PC-3 (cell line): ENCODE measurements at regions of chr17 and their contacts with region 1.

Region 1: GRCh38 chr17:47649153-47649971 is at the start of gene KPNB1:
- DNase-seq: peak; percentile 100
- ATAC-seq: peak; percentile 86
- H3K4me3 ChIP-seq: peak within 1 kb of the TSS; percentile 84
- H3K27ac ChIP-seq: peak within 1 kb of the TSS; percentile 79
- H3K4me1 ChIP-seq: peaks cover 36% of the 10 kb centered on the region
- H3K27me3 ChIP-seq: no peaks in the 10 kb centered on the region
- CTCF ChIP-seq: no peak
- total RNA-seq, gene KPNB1: 390 and 437 TPM in 2 replicates

Region 2: DNA sequence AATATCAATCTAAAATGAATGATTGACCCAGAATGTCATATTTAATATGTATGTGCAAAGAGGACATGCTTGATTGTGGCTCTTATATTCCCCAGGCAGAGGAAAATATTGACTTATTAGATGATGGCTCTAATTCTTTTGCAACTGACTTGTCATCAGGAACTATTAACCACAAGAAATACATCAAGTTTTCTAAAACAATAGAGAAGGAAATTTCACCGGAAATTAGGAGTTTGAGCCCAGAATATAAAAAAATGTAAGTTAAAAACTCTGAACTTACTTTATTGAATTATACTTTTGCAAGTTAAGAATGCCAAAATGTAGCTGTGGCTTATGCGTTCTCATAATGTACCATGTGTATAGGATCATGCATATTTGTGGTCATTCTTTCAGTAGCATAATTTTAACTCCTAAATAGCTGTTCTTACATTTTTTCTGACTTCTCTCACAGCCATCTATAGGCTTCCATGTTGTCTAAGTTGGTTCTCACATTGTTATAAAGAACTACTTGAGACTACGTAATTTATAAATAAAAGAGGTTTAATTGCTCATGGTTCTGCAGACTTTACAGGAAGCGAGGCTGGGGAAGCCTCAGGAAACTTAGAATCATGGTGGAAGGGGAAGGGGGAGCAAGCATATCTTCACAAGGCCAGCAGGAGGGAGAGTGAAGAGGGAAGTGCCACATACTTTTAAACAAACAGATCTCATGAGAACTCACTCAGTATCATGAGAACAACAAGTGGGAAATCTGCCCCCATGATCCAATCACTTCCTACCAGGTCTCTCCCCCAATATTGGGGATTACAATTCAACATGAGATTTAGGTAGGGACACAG is 314.0 kb before region 1 on chr17:
- CTCF ChIA-PET with region 1: no interaction called
- POLR2A ChIA-PET with region 1: no interaction called
- intact Hi-C with region 1: loop called (anchors 10 kb)
- DNase-seq: no peak
- ATAC-seq: no peak
- H3K4me3 ChIP-seq: no peak overlapping the region
- H3K27ac ChIP-seq: no peak overlapping the region
- H3K4me1 ChIP-seq: peaks cover 7% of the 10 kb centered on the region
- H3K27me3 ChIP-seq: no peaks in the 10 kb centered on the region
- CTCF ChIP-seq: no peak

Region 3: DNA sequence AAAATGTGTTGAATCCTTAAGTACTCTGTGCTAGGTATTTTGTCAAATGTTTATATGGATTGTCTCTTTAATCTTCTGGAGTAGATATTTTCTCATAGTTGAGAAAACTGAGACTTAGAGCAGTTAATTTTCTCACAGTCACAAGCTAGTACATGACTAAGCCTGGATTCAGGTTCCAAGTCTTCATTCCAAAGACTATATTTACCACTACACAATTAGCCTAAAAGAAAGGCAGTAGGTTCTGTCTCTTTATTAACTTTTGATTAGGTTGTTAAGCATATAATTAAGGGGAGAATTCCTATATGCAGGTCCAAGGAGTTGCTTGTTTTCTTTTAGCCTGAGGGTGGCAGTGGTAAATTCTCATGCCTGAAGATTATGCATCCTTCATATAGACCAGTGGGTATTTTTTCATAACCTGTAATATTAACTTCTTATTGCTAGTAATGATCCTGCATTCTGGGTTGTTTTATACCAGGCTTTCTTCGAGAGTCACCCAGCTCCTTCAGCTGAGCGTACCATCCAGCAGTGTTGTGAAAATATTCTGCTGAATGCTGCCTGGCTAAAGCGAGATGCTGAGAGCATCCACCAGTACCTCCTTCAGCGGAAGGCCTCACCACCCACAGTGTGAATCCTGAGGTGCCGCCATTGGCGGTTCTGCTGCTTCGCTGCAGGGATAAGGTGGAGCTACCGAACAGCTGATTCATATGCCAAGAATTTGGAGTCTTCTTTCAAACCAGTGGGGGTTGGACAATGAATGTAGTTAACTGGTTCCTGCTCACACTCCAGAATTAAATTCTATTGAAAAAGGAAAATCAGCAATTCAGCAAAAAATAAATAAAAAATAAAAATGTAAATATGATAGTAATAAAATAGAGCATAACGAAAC is 27.8 kb before region 1 on chr17:
- CTCF ChIA-PET with region 1: interaction called, 5 read pairs
- POLR2A ChIA-PET with region 1: interaction called, 9 read pairs
- intact Hi-C with region 1: loop called (anchors 1 kb)
- DNase-seq: peak; percentile 98
- ATAC-seq: peak; percentile 93
- H3K4me3 ChIP-seq: no peak overlapping the region; the same call in 1 of the 2 replicates
- H3K27ac ChIP-seq: peak overlapping the region; percentile 41
- H3K4me1 ChIP-seq: peaks cover 27% of the 10 kb centered on the region
- H3K27me3 ChIP-seq: no peaks in the 10 kb centered on the region
- CTCF ChIP-seq: peak; percentile 48

Region 4: GRCh38 chr17:47698749-47699535 is 49.6 kb after region 1 on chr17:
- CTCF ChIA-PET with region 1: no interaction called
- POLR2A ChIA-PET with region 1: interaction called, 11 read pairs
- intact Hi-C with region 1: no loop called
- DNase-seq: peak; percentile 75
- ATAC-seq: peak; percentile 26
- H3K4me3 ChIP-seq: no peak overlapping the region
- H3K27ac ChIP-seq: no peak overlapping the region
- H3K4me1 ChIP-seq: peaks cover 7% of the 10 kb centered on the region; the same call in 1 of the 2 replicates
- H3K27me3 ChIP-seq: no peaks in the 10 kb centered on the region
- CTCF ChIP-seq: peak; percentile 99

Region 5: GRCh38 chr17:47757386-47757785 is 108.0 kb after region 1 on chr17:
- CTCF ChIA-PET with region 1: no interaction called
- POLR2A ChIA-PET with region 1: interaction called, 14 read pairs
- intact Hi-C with region 1: no loop called
- DNase-seq: no peak
- ATAC-seq: no peak
- H3K4me3 ChIP-seq: no peak overlapping the region
- H3K27ac ChIP-seq: no peak overlapping the region
- H3K4me1 ChIP-seq: no peaks in the 10 kb centered on the region
- H3K27me3 ChIP-seq: peaks cover 41% of the 10 kb centered on the region
- CTCF ChIP-seq: no peak